Endothelial cell of umbilical vein (primary cell): ENCODE measurements at regions of chr20 and their contacts with region 1.

Region 1: DNA sequence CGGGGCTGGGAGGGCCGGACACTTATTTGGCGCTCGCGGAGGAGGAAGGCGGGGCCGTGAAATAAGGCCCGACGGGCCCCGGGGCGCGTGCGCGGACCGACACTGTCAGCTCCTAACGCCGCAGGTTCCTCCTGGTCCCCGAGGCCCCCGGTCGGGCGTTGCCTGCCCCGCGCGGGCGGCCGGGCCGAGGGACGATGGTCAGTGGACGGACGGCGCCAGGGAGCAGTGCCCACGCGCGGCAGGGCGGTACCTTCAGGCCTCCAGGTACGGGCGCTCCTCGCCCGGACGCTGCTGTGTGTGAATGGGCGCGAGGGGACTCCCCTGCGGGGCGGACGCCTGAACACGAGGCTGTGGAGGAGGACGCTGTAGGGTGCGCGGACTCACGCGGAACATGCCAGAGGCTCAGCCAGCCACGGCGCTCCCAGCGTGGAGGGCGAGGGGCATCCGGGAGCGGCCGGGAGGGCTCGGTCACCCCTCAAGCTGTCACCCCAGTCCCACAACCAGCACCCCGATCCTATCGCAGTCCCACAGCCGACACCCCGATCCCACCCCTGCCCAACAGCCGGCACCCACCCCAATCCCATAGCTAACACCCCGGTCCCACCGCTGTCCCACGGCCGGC is 339 bp upstream of the GMEB2 start:
- DNase-seq: peak; percentile 93
- H3K4me3 ChIP-seq: peak overlapping the region; percentile 82 to 100 (median 88)
- H3K27ac ChIP-seq: peak overlapping the region; percentile 51
- H3K4me1 ChIP-seq: peaks cover 16% of the 10 kb centered on the region
- H3K27me3 ChIP-seq: no peaks in the 10 kb centered on the region
- CTCF ChIP-seq: no peak
- POLR2A ChIP-seq: peak; percentile 83

Region 2: DNA sequence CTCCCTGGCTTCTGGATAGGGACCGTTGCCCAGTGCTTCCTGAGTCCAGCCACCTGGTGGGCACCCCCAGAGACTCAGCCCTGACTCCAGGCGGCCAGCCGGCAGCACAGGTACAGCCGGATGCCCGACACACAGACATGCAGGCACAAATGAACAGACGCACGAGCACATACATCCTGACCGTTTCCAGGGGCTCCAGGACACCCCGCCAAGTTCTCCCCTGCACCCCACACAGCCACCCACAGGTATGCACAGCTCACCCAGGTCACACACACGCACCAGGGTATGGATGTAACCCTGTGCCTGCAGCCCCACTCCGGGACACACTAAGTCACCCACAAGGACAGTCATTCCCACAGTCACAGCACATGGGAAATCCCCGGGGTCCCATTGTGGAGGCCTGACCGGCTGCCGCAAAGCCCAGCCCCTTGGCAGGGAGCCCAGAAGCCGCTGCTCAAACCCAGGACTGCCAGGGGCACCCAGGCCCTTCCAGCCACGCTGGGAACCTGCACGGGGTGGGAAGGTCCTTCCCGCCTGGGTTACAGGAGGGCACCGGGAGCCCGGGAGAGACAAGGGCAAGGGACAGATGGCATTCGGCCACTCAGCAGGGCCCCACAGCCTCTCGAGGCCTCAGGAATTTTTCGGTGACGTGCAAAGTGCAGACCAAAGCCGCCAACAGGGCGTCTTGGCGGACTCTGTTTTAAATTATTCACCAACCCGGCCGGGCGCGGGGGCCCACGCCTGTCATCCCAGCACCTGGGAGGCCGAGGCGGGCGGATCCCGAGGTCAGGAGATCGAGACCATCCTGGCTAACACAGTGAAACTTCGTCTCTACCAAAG is 144.2 kb before region 1 on chr20:
- CTCF ChIA-PET with region 1: no interaction called
- POLR2A ChIA-PET with region 1: no interaction called
- dilution Hi-C with region 1: no loop called
- intact Hi-C with region 1: no loop called
- DNase-seq: no peak
- H3K4me3 ChIP-seq: no peak overlapping the region
- H3K27ac ChIP-seq: no peak overlapping the region
- H3K4me1 ChIP-seq: no peaks in the 10 kb centered on the region
- H3K27me3 ChIP-seq: no peaks in the 10 kb centered on the region
- CTCF ChIP-seq: no peak
- POLR2A ChIP-seq: no peak

Region 3: GRCh38 chr20:63553227-63553932 is 73.9 kb before region 1 on chr20:
- CTCF ChIA-PET with region 1: no interaction called
- POLR2A ChIA-PET with region 1: no interaction called
- dilution Hi-C with region 1: no loop called
- intact Hi-C with region 1: loop called (anchors 1 kb)
- DNase-seq: peak; percentile 84
- H3K4me3 ChIP-seq: peak overlapping the region; percentile 56 to 91 (median 72)
- H3K27ac ChIP-seq: no peak overlapping the region
- H3K4me1 ChIP-seq: no peaks in the 10 kb centered on the region
- H3K27me3 ChIP-seq: no peaks in the 10 kb centered on the region
- CTCF ChIP-seq: no peak
- POLR2A ChIP-seq: peak; percentile 44

Region 4: GRCh38 chr20:63641792-63642544 is 14.7 kb after region 1 on chr20:
- CTCF ChIA-PET with region 1: interaction called, 7 read pairs
- POLR2A ChIA-PET with region 1: interaction called, 5 read pairs
- dilution Hi-C with region 1: no loop called
- intact Hi-C with region 1: loop called (anchors 1 kb)
- DNase-seq: peak; percentile 57
- H3K4me3 ChIP-seq: peak overlapping the region; percentile 11 to 50 (median 20)
- H3K27ac ChIP-seq: no peak overlapping the region
- H3K4me1 ChIP-seq: peaks cover 2% of the 10 kb centered on the region
- H3K27me3 ChIP-seq: no peaks in the 10 kb centered on the region
- CTCF ChIP-seq: peak in 1 of 2 donors; percentile 37
- POLR2A ChIP-seq: no peak

Region 5: DNA sequence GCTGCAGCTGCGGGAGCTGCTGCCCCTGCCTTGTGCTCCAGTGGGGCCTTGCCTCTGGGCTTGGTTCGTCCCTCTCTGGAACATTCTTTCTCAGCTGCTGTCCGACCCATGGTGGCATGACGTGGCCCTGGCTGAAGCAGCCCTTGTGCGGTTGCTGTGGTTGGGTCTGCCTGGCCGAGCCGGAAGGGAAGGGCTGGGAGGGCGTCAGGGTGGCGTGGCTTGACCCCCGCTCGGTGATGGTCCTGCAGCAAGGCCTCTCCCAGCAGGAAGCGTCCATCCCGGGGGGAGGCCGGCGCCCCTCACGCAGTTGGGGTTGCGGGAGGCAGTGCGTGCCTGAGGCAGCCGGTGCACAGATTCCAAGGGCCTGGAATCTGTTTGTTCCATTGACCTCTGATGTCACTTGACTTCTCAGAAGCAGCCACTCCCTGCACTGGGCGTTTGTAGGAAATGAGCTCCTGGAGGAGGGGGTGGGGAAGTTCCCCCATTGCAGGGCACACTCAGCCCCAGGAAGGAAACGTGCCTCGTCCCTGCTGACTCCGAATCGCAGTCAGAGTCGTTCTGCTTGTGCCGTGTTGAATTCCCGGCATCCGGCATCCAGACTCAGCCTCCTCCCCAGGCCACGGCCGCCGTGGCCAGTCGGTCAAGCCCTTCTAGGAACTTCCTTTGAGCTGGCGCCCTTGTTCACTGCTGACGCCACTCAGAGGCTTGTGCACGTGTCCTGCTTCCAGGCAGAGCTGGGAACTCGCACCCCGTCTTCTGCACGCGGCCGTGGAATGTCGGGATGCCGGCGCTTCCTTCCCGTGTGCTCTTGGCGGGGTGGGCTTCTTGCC is 59.5 kb after region 1 on chr20:
- CTCF ChIA-PET with region 1: no interaction called
- POLR2A ChIA-PET with region 1: no interaction called
- dilution Hi-C with region 1: no loop called
- intact Hi-C with region 1: loop called (anchors 1 kb)
- DNase-seq: peak; percentile 92
- H3K4me3 ChIP-seq: no peak overlapping the region
- H3K27ac ChIP-seq: peak overlapping the region; percentile 79
- H3K4me1 ChIP-seq: peaks cover 49% of the 10 kb centered on the region
- H3K27me3 ChIP-seq: no peaks in the 10 kb centered on the region
- CTCF ChIP-seq: no peak
- POLR2A ChIP-seq: peak; percentile 55

Region 6: GRCh38 chr20:63739130-63740069 is 112.2 kb after region 1 on chr20 and contains the start of gene SLC2A4RG:
- CTCF ChIA-PET with region 1: no interaction called
- POLR2A ChIA-PET with region 1: no interaction called
- dilution Hi-C with region 1: no loop called
- intact Hi-C with region 1: loop called (anchors 1 kb)
- DNase-seq: peak; percentile 40
- H3K4me3 ChIP-seq: peak within 1 kb of the TSS; percentile 41 to 72 (median 52)
- H3K27ac ChIP-seq: no peak within 1 kb of the TSS
- H3K4me1 ChIP-seq: peaks cover 9% of the 10 kb centered on the region
- H3K27me3 ChIP-seq: no peaks in the 10 kb centered on the region
- CTCF ChIP-seq: no peak
- POLR2A ChIP-seq: no peak
- total RNA-seq, gene SLC2A4RG: 69.3 and 69.4 TPM in 2 replicates